Astrocyte of the cerebellum (primary cell): ENCODE measurements at regions of chr10 and their contacts with region 1.

Region 1: DNA sequence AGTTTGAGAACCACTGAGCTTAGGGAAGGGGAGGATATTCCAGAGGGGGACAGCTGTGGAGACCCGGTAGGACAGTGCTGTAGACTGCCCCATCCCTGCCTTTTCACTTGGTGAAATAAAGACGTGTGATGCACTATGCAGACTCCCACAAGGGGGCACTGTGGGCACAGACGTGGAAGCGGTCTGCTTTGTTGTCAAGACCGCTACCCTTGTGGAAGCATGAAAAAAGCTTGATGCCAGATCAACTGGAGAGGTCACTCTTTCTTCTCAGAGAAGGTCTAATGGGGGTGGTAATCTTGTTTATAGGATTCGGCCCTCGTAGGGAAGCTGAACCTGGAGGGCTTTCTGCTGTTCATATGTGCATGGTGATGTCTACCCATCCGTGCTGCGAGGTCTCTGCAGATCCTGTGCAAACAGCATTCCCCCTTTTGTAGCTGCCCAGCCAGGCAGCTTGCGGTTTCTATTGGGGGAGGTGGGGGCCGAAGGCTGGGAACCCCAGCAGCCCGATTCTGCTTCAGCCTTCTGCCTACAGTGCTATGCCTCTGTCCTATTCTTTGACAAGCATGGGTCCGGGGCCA is 13.7 kb downstream of the RPS24 start:
- DNase-seq: peak; percentile 83
- H3K4me3 ChIP-seq: no peak overlapping the region
- CTCF ChIP-seq: peak; percentile 91

Region 2: DNA sequence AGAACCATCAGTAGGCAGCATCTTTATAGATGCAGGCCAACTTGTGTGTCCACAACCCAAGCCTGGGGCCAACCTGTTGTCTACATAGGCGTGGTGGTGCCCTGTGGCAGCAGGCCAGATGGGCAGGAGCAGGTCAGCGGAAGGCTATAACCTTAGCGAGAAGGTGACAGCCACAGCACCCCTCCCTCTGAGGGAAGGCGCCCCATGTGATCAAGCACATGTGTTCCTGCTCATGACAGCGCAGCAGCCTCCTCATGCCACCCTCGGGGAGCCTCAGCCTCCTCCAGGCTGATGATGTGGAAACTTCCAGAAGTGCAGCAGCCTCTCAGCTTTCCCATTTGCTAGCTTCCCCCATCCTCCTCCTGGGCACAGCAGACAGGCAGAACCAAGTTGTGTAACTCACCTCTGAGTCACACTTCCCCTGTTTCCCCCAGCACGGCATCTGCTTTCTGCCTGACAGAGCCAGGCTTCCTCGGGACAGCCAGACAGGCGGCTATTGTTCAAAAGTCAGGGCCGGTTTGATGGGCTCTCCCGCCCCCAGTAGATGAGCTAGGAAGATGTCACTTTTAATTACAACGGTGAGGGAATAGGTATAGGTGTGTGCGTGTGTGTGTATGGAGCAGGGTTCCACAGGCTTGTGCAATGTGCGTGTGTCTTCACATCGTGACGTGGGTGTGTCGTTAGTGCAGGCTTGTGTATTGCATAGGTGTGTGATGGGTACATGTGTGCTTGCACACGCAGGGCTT is 709.4 kb after region 1 on chr10:
- in situ Hi-C with region 1: loop called (anchors 10 kb)
- DNase-seq: peak; percentile 84
- H3K4me3 ChIP-seq: no peak overlapping the region
- CTCF ChIP-seq: no peak

Region 3: GRCh38 chr10:79019911-79020491 is 972.6 kb after region 1 on chr10:
- in situ Hi-C with region 1: no loop called
- DNase-seq: no peak
- H3K4me3 ChIP-seq: no peak overlapping the region
- CTCF ChIP-seq: no peak

Region 4: DNA sequence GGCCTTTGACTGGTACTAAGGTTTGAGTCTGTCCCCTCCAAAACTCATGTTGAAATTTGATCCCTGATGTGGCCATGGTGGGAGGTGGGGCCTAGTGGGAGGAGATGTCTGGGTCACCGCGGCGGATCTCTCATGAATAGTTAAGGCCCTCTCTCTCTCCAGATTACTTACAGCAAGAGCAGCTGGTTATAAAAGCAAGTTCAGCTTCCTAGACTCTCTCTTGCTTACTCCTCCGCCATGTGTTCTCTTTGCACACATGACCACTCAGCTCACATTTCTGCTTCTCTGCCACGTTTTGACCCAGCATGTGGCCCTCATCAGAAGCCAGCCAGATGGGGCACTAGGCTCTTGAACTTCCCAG is 991.4 kb after region 1 on chr10:
- in situ Hi-C with region 1: loop called (anchors 10 kb)
- DNase-seq: no peak
- H3K4me3 ChIP-seq: no peak overlapping the region
- CTCF ChIP-seq: no peak

Region 5: GRCh38 chr10:79069325-79070080 is 1022.1 kb after region 1 on chr10:
- in situ Hi-C with region 1: loop called (anchors 5 kb)
- DNase-seq: no peak
- H3K4me3 ChIP-seq: peak overlapping the region; percentile 98
- CTCF ChIP-seq: peak; percentile 1

Region 6: DNA sequence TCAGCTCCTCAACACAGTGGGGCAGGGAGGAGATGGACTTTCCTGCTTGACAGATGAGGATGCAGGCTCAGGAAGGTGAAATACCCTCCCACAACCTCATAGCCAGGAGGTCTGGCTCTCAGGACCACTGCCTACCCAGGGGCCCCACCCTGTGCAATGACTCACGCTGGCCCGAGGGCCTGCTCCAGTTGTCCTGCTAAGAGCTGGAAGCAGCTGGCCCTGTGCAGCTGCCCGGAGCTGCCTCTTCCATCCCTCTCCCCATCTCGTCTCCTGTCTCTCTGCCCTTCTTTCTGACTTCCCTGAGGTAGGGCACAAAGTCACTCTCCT is 1145.2 kb after region 1 on chr10:
- in situ Hi-C with region 1: loop called (anchors 5 kb)
- DNase-seq: no peak
- H3K4me3 ChIP-seq: no peak overlapping the region
- CTCF ChIP-seq: no peak